ENCODE measurements at regions of chr11 and their contacts with region 1.

Region 1: GRCh38 chr11:35305670-35306382 is 113.5 kb downstream of the SLC1A2 start:
- DNase-seq: no peak
- H3K4me3 ChIP-seq: no peak overlapping the region
- CTCF ChIP-seq: peak; percentile 60

Region 2: GRCh38 chr11:34997952-34998528 is 307.8 kb before region 1 on chr11:
- CTCF ChIA-PET with region 1: interaction called, 13 read pairs
- POLR2A ChIA-PET with region 1: no interaction called
- DNase-seq: no peak
- H3K4me3 ChIP-seq: no peak overlapping the region
- CTCF ChIP-seq: no peak

Region 3: DNA sequence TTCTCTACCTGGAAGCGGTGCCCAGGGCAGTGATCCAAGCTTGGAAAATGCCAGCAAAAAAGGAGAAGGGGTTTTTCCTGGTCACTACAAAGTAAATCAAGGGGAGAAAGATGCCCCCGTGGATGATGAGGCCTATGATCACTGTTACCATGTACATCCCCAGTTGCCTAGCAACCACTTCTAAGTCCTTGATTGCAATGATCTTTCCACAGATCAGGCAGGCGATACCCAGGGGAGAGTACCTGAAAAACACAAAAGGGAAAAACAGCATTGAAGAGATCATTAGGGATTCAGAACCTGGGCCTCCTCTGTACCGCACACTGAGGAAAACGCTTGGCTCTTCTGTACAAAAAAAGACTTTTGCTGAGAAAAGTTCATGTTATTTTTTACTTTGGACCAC is 13.5 kb before region 1 on chr11:
- CTCF ChIA-PET with region 1: interaction called, 12 read pairs
- POLR2A ChIA-PET with region 1: no interaction called
- DNase-seq: no peak
- H3K4me3 ChIP-seq: no peak overlapping the region
- CTCF ChIP-seq: no peak

Region 4: DNA sequence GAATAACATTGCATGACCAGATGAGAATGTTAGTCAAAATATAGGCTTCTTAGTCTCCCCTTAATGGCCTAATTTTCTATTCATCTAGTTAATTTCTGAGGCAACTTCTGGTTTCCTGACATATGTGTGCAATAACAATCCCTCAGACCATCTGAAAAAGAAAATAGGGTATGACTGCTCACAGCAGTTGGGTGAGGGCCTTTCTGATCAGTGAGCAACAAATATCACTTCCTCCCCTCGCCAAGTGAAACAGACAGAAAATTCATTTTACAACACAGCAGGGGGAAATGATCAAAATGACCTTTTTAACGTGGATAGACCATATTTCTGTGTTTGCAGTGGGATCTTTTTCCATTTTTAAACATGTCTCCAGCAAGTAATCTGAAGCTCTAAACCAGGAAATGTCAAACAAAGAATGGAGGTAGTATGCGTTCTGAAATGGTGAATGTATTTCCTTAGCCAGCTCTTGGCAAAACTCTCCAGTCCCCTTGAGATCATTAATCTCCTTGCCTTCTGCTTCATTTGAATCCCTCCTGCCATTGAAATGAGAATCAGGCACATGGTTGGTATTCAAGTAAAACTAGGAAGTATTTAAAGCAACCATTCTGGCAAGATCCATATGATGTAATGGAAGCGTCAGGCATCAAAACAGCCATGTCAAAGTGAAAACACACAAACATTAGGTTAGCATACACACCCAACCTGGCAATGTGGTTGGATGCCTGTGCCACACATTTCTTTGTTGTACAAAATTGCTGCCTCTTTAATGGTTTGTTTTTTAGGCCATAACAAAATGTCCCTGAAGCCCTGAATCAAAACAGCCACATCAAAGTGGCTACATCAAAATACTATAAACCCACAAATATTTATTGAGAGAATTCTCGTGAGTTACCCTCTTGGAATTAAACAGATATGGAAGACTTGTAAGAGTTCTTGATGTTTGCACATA is 13.4 kb after region 1 on chr11:
- CTCF ChIA-PET with region 1: interaction called, 14 read pairs
- POLR2A ChIA-PET with region 1: no interaction called
- DNase-seq: no peak
- H3K4me3 ChIP-seq: no peak overlapping the region
- CTCF ChIP-seq: no peak

Measured in AG04449 (cell line).